ENCODE measurements at regions of chr21 and their contacts with region 1.

Region 1: GRCh38 chr21:15586752-15587445 is 142.9 kb upstream of the USP25 start:
- DNase-seq: no peak
- H3K4me3 ChIP-seq: no peak overlapping the region
- H3K27ac ChIP-seq: no peak overlapping the region
- H3K4me1 ChIP-seq: no peaks in the 10 kb centered on the region
- H3K27me3 ChIP-seq: no peaks in the 10 kb centered on the region
- CTCF ChIP-seq: no peak
- EP300 ChIP-seq: no peak
- POLR2A ChIP-seq: no peak

Region 2: GRCh38 chr21:14259747-14260146 is 1327.2 kb before region 1 on chr21:
- in situ Hi-C with region 1: loop called in 2 of 4 experiments (anchors 10 to 25 kb)
- intact Hi-C with region 1: loop called (anchors 5 kb)
- DNase-seq: no peak
- H3K4me3 ChIP-seq: peak overlapping the region in 1 of 4 donors; percentile 17
- H3K27ac ChIP-seq: peak overlapping the region; percentile 49 to 69 (median 58)
- H3K4me1 ChIP-seq: peaks cover 0 to 49% (median 16%) of the 10 kb centered on the region in 4 donors
- H3K27me3 ChIP-seq: no peaks in the 10 kb centered on the region
- CTCF ChIP-seq: peak; percentile 44 to 64 (median 54)
- EP300 ChIP-seq: no peak
- POLR2A ChIP-seq: no peak

Region 3: GRCh38 chr21:15651172-15651571 is 64.3 kb after region 1 on chr21:
- in situ Hi-C with region 1: no loop called
- intact Hi-C with region 1: no loop called
- DNase-seq: no peak
- H3K4me3 ChIP-seq: no peak overlapping the region
- H3K27ac ChIP-seq: no peak overlapping the region
- H3K4me1 ChIP-seq: no peaks in the 10 kb centered on the region
- H3K27me3 ChIP-seq: no peaks in the 10 kb centered on the region
- CTCF ChIP-seq: no peak
- EP300 ChIP-seq: no peak
- POLR2A ChIP-seq: no peak